Esophagus squamous epithelium (tissue), 5 donors: ENCODE measurements at regions of chr5 and their contacts with region 1.

Region 1: GRCh38 chr5:95870105-95870672 is 47.7 kb upstream of the GLRX start:
- DNase-seq: no peak
- H3K4me3 ChIP-seq: no peak overlapping the region
- H3K27ac ChIP-seq: peak overlapping the region in 2 of 4 donors; percentile 26 to 56
- H3K4me1 ChIP-seq: peaks cover 0 to 25% (median 15%) of the 10 kb centered on the region in 3 donors
- H3K27me3 ChIP-seq: no peaks in the 10 kb centered on the region
- CTCF ChIP-seq: no peak
- POLR2A ChIP-seq: no peak

Region 2: DNA sequence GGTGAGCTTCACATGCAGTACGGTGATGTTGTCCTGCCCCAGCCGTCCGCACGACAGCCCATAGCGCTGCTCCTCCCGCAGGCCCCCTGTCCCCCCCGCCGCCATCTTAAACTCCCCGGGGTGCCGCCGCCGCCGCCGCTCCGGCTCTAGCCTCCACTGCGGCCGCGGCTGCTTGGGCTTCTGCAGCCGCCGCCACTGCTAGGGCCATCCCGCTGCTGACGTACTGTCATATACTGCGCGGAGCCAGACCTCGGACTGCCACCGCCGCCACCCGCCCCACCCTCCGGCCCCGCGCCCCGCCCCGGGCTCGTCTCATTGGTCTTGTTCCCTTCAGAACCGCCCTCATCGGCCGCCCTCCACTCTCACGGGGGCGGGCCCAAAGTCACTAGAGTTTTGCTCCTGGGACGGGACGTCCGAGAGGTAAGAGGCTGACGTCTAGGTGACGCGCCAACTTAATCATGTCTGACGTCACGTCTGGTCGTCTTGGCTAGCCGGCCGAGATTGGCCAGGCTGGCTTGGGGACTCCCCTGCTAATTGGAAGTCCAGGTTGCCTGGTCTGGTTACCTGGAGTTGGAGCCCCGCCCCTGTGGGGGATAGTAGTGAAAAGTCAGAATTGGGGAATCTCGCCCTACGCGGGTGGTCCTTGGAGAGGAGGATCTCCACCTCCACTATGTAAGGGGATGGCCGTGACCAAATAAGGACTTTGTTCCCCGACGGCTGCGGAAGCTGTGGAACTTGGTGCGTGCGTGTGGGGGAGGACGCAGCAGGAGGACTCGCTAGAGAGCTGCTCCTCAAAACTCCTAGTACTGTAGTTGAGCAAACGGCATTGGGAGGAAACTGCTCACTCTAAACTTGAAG is 91.7 kb after region 1 on chr5 and contains the start of gene ELL2:
- intact Hi-C with region 1: loop called (anchors 10 kb)
- DNase-seq: peak; percentile 99
- H3K4me3 ChIP-seq: peak within 1 kb of the TSS; percentile 58 to 99 (median 89)
- H3K27ac ChIP-seq: peak within 1 kb of the TSS; percentile 98 to 100 (median 99)
- H3K4me1 ChIP-seq: peaks cover 16 to 63% (median 21%) of the 10 kb centered on the region in 3 donors
- H3K27me3 ChIP-seq: no peaks in the 10 kb centered on the region
- CTCF ChIP-seq: no peak
- POLR2A ChIP-seq: peak in 3 of 4 donors; percentile 21 to 94 (median 94)
- total RNA-seq, gene ELL2: 74.9 to 124 (median 121) TPM

Region 3: GRCh38 chr5:96049398-96050272 is 179.4 kb after region 1 on chr5:
- intact Hi-C with region 1: no loop called
- DNase-seq: no peak
- H3K4me3 ChIP-seq: no peak overlapping the region
- H3K27ac ChIP-seq: no peak overlapping the region
- H3K4me1 ChIP-seq: peaks cover 0 to 25% (median 0%) of the 10 kb centered on the region in 3 donors
- H3K27me3 ChIP-seq: no peaks in the 10 kb centered on the region
- CTCF ChIP-seq: no peak
- POLR2A ChIP-seq: no peak